ENCODE measurements at regions of chr10 and their contacts with region 1.

Region 1: GRCh38 chr10:105063796-105064195 is 422.7 kb downstream of the SORCS3 start:
- DNase-seq: peak in 1 of 2 donors; percentile 9
- ATAC-seq: peak in 3 of 8 donors; percentile 46 to 61 (median 49)
- H3K4me3 ChIP-seq: no peak overlapping the region
- H3K27ac ChIP-seq: no peak overlapping the region
- H3K4me1 ChIP-seq: no peaks in the 10 kb centered on the region
- H3K27me3 ChIP-seq: no peaks in the 10 kb centered on the region
- CTCF ChIP-seq: peak in 8 of 9 donors; percentile 17 to 57 (median 50)

Region 2: GRCh38 chr10:105096316-105096715 is 32.5 kb after region 1 on chr10:
- intact Hi-C with region 1: no loop called
- DNase-seq: no peak
- ATAC-seq: no peak
- H3K4me3 ChIP-seq: no peak overlapping the region
- H3K27ac ChIP-seq: no peak overlapping the region
- H3K4me1 ChIP-seq: no peaks in the 10 kb centered on the region
- H3K27me3 ChIP-seq: peaks cover 0 to 3% (median 0%) of the 10 kb centered on the region in 7 donors
- CTCF ChIP-seq: no peak

Region 3: GRCh38 chr10:105691811-105692210 is 628.0 kb after region 1 on chr10:
- intact Hi-C with region 1: loop called in 3 of 10 experiments (anchors 5 to 10 kb)
- DNase-seq: no peak
- ATAC-seq: no peak
- H3K4me3 ChIP-seq: no peak overlapping the region
- H3K27ac ChIP-seq: no peak overlapping the region
- H3K4me1 ChIP-seq: no peaks in the 10 kb centered on the region
- H3K27me3 ChIP-seq: no peaks in the 10 kb centered on the region
- CTCF ChIP-seq: peak in 4 of 9 donors; percentile 17 to 28 (median 20)